GM13977 (cell line): ENCODE measurements at regions of chr1 and their contacts with region 1.

Region 1: DNA sequence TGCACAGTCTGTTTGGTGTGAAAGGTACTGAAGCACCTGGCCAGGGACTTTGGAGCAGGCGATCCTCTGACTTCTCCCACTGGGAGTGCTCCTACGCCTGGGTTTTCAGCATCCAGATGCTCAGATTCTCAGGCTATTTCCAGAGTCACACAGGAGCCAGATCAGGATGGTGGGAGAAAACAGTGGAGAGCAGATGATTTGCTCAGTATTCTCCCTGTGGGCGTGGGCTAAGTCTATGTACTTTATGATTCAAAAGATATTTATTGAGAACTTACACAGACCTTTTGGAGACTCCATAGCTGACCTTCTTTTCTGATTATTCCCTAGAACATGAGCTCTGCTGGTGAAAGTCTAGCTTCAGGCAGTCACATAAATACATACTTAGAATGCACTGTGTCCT is 134.6 kb downstream of the TENT5C start:
- DNase-seq: no peak
- CTCF ChIP-seq: no peak

Region 2: DNA sequence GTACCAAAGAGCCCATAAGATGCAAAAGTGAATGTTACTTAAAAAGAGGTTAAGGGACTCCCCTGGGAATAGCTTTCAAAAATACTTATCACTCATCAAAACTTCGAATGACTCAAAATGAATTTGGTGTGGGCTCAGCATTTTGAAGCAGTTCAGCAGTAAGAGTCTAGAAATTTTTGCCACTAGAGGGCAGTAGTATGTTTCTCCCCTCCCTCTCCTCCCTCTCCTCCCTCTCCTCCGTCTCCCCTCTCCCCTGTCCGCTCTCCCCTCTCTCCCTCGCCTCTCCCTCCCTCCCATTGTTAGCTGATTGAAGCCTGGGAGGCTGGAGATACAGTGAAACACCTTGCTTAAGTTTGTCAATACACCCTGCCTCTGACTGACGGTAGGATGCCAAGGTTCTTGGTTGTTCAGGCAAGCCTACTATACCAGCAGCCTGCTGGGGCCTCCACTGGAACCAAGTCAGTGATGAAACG is 205.5 kb before region 1 on chr1:
- in situ Hi-C with region 1: loop called (anchors 10 kb)
- DNase-seq: peak; percentile 53
- CTCF ChIP-seq: peak; percentile 63

Region 3: GRCh38 chr1:117843791-117844190 is 103.3 kb after region 1 on chr1:
- in situ Hi-C with region 1: no loop called
- DNase-seq: no peak
- CTCF ChIP-seq: no peak

Region 4: GRCh38 chr1:118204648-118205047 is 464.2 kb after region 1 on chr1:
- in situ Hi-C with region 1: no loop called
- DNase-seq: no peak
- CTCF ChIP-seq: no peak